ENCODE measurements at regions of chr2 and their contacts with region 1.

Region 1: DNA sequence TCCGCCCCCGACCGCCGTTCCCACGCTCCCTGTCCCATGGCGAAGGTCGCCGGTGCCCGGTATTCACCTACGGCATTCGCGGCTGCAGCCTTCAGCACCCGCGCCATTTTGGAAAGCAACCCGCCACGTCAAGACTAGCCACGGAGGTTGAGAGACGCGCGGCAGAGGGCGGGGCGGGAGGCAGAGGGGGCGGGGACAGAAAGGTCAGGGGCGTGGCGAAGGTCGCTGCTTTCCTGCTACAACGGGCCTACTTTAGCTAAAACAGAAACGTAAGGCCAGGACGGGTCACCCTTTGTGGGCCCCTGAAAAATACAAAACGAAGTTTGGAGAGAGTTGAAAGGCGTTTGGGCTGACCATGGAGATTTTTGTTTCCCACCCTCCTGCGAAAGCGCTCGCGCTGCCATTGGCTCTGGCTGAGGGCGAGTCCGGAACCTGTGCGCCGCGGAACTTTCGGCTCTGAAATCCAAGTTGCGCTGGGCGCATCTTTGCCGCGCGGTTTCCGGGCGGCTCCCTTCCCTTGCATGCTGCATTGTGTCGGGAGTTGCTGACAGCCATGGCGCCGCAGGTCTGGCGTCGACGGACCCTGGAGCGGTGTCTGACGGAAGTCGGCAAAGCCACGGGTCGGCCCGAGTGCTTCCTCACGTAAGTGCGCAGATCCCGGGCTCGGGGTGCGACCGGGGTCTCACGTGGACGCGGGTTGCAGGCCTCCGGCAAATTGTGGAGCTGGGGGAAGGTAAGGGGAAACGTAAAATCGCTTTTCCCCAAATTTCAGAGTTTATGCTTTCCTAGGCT is at the starts of genes MCEE and MPHOSPH10:
- DNase-seq: peak; percentile 89
- H3K4me3 Mint-ChIP-seq: no peak within 1 kb of the TSS
- H3K27ac Mint-ChIP-seq: no peak within 1 kb of the TSS
- H3K4me1 Mint-ChIP-seq: no peaks in the 10 kb centered on the region
- H3K27me3 Mint-ChIP-seq: no peaks in the 10 kb centered on the region
- CTCF ChIP-seq: no peak
- total RNA-seq, gene MCEE: 14.7 and 14.9 TPM in 2 replicates
- total RNA-seq, gene MPHOSPH10: 31.4 and 32.8 TPM in 2 replicates

Region 2: DNA sequence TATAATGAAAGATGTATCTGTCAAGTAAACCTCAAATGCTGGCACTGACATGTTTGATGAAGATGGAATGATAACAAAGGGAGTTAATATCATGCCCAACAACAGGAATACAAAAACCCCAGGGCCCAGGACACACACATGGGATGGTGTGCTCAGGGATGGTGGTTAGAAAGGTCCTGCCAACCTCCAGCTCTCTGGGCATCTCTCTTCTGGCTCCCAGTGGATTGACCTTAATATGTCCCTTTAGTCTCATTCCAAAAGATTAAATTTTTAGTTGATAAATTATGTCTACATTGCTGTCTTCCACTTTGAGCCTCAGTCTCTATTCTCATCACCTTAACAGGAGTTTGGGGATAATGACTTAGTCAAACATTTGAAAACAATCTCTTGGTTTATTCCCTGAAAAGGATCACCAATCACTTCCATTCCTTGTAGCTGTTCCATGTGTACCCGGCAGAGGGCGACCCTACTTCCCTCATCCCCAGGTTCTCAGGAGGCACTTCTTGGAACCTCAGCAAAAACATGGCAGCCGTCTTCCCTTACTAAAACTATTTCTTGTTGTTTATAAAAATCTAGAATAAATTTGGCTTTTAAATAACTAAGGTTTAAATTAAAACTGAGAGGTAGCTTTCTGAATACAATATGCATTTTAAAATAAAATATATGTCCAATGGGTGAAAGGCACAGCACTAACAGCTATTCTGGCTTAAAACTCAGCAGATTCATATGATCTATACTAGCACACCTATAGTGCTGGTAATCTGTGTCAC is 29.9 kb before region 1 on chr2:
- CTCF ChIA-PET with region 1: interaction called, 27 read pairs
- POLR2A ChIA-PET with region 1: interaction called, 44 read pairs
- intact Hi-C with region 1: no loop called
- DNase-seq: peak; percentile 75
- H3K4me3 Mint-ChIP-seq: no peak overlapping the region
- H3K27ac Mint-ChIP-seq: no peak overlapping the region
- H3K4me1 Mint-ChIP-seq: peaks cover 11% of the 10 kb centered on the region
- H3K27me3 Mint-ChIP-seq: no peaks in the 10 kb centered on the region
- CTCF ChIP-seq: peak; percentile 50

Region 3: GRCh38 chr2:71143782-71144181 is 13.5 kb after region 1 on chr2:
- CTCF ChIA-PET with region 1: interaction called, 6 read pairs
- POLR2A ChIA-PET with region 1: interaction called, 15 read pairs
- intact Hi-C with region 1: no loop called
- DNase-seq: no peak
- H3K4me3 Mint-ChIP-seq: no peak overlapping the region
- H3K27ac Mint-ChIP-seq: no peak overlapping the region
- H3K4me1 Mint-ChIP-seq: no peaks in the 10 kb centered on the region
- H3K27me3 Mint-ChIP-seq: no peaks in the 10 kb centered on the region
- CTCF ChIP-seq: no peak

Region 4: GRCh38 chr2:71226965-71227560 is 96.8 kb after region 1 on chr2 and contains the start of gene PAIP2B:
- CTCF ChIA-PET with region 1: interaction called, 3 read pairs
- POLR2A ChIA-PET with region 1: interaction called, 15 read pairs
- intact Hi-C with region 1: no loop called
- DNase-seq: peak; percentile 99
- H3K4me3 Mint-ChIP-seq: peak within 1 kb of the TSS; percentile 93
- H3K27ac Mint-ChIP-seq: peak within 1 kb of the TSS; percentile 63
- H3K4me1 Mint-ChIP-seq: peaks cover 12% of the 10 kb centered on the region
- H3K27me3 Mint-ChIP-seq: peaks cover 12% of the 10 kb centered on the region
- CTCF ChIP-seq: no peak
- total RNA-seq, gene PAIP2B: 1.4 and 1.8 TPM in 2 replicates

Region 5: GRCh38 chr2:71452565-71452964 is 322.3 kb after region 1 on chr2:
- CTCF ChIA-PET with region 1: no interaction called
- POLR2A ChIA-PET with region 1: no interaction called
- intact Hi-C with region 1: no loop called
- DNase-seq: peak; percentile 92
- H3K4me3 Mint-ChIP-seq: no peak overlapping the region
- H3K27ac Mint-ChIP-seq: no peak overlapping the region
- H3K4me1 Mint-ChIP-seq: peaks cover 20% of the 10 kb centered on the region
- H3K27me3 Mint-ChIP-seq: no peaks in the 10 kb centered on the region
- CTCF ChIP-seq: no peak